Caco-2 (cell line): ENCODE measurements at regions of chr10 and their contacts with region 1.

Region 1: DNA sequence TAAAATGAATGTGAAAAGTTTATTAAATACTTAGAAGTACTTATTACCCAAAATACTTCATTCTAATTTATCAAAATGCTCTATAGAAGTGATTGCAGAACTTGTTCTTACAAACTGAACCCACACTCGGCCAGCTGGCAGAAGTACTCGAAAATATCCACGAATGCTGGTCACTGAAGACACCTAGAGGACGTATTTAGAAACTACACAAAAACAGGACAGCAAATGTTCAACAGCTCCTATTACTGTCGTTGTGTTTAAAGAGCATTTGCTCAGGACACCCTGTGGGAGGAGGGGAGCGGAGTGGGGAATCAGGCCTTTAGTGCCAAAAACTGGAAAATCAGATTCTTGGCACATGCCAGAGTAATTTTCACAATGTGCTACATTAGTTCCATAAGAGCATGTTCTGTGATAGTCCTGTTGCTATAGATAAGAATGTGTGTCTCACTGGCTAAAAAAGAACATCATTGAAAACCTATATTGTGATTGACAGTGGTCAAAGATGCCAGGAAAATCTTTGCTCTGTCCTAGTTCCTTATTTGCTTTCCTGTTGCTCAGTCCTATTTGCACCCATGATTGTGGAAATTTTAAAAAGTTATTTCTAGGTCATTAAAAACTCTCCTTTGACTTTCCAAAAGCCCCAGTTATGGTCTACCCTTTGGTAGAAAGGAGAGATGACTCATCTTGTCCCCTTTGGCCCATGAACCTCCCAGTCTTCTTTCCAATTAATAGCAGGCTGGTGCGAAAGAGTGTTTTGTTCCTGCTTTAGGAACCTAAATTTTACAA is 49.0 kb upstream of the NRBF2 start:
- DNase-seq: peak; percentile 54 to 69
- H3K4me3 ChIP-seq: no peak overlapping the region
- H3K4me3 Mint-ChIP-seq: no peak overlapping the region
- H3K27ac Mint-ChIP-seq: no peak overlapping the region
- H3K4me1 ChIP-seq: no peaks in the 10 kb centered on the region
- H3K4me1 Mint-ChIP-seq: no peaks in the 10 kb centered on the region
- H3K27me3 ChIP-seq: no peaks in the 10 kb centered on the region
- H3K27me3 Mint-ChIP-seq: peaks cover 32% of the 10 kb centered on the region
- CTCF ChIP-seq: peak; percentile 86 to 90

Region 2: GRCh38 chr10:62437696-62438095 is 646.4 kb before region 1 on chr10:
- CTCF ChIA-PET with region 1: interaction called, 3 read pairs
- POLR2A ChIA-PET with region 1: no interaction called
- intact Hi-C with region 1: loop called (anchors 1 kb)
- DNase-seq: peak in 1 of 2 experiments; percentile 79
- H3K4me3 ChIP-seq: no peak overlapping the region
- H3K4me3 Mint-ChIP-seq: no peak overlapping the region
- H3K27ac Mint-ChIP-seq: no peak overlapping the region
- H3K4me1 ChIP-seq: no peaks in the 10 kb centered on the region
- H3K4me1 Mint-ChIP-seq: no peaks in the 10 kb centered on the region
- H3K27me3 ChIP-seq: no peaks in the 10 kb centered on the region
- H3K27me3 Mint-ChIP-seq: peaks cover 21% of the 10 kb centered on the region
- CTCF ChIP-seq: peak; percentile 85

Region 3: GRCh38 chr10:62492012-62492869 is 591.9 kb before region 1 on chr10:
- CTCF ChIA-PET with region 1: interaction called, 7 read pairs
- POLR2A ChIA-PET with region 1: no interaction called
- intact Hi-C with region 1: loop called (anchors 1 kb)
- DNase-seq: peak in 1 of 2 experiments; percentile 36
- H3K4me3 ChIP-seq: no peak overlapping the region
- H3K4me3 Mint-ChIP-seq: no peak overlapping the region
- H3K27ac Mint-ChIP-seq: no peak overlapping the region
- H3K4me1 ChIP-seq: no peaks in the 10 kb centered on the region
- H3K4me1 Mint-ChIP-seq: no peaks in the 10 kb centered on the region
- H3K27me3 ChIP-seq: 0 out of 2 replicates have a peak, but pooled peaks cover 1% of the 10 kb centered on the region
- H3K27me3 Mint-ChIP-seq: peaks cover 19% of the 10 kb centered on the region
- CTCF ChIP-seq: peak; percentile 79 to 83

Region 4: DNA sequence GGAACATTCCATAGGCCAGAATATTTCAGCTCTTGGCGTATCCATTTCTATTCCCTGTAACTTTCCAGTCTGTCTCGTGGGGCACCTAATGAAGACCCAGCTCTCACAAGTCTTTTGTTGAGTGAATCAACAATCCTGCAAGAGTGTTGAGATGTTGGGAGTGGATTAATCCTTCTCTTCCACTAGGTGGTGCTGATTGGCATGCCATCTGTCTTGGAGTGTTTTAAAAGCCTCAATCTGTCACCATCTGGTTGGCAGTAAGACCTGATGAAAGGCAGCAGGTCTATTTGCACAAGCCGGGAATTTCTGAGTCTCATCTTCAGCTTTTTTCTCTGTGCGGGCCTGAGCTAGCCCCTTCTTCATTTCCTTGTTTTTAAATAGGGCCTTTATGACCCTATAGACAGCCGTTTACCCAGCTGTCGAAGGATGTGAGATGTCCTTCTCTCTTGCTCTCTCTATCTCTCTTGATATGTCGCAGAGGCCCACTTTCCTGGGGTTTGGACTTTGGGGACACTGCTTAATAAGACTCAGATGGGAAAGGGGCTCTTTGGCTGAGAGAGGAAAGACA is 529.4 kb before region 1 on chr10:
- CTCF ChIA-PET with region 1: no interaction called
- POLR2A ChIA-PET with region 1: no interaction called
- intact Hi-C with region 1: loop called (anchors 1 kb)
- DNase-seq: peak in 1 of 2 experiments; percentile 50
- H3K4me3 ChIP-seq: no peak overlapping the region
- H3K4me3 Mint-ChIP-seq: no peak overlapping the region
- H3K27ac Mint-ChIP-seq: no peak overlapping the region
- H3K4me1 ChIP-seq: no peaks in the 10 kb centered on the region
- H3K4me1 Mint-ChIP-seq: no peaks in the 10 kb centered on the region
- H3K27me3 ChIP-seq: no peaks in the 10 kb centered on the region; the same call in 1 of the 2 replicates
- H3K27me3 Mint-ChIP-seq: peaks cover 22% of the 10 kb centered on the region
- CTCF ChIP-seq: peak; percentile 52 to 74

Region 5: GRCh38 chr10:62594093-62594520 is 490.0 kb before region 1 on chr10:
- CTCF ChIA-PET with region 1: interaction called, 4 read pairs
- POLR2A ChIA-PET with region 1: no interaction called
- intact Hi-C with region 1: loop called (anchors 1 kb)
- DNase-seq: peak; percentile 68 to 82
- H3K4me3 ChIP-seq: no peak overlapping the region
- H3K4me3 Mint-ChIP-seq: no peak overlapping the region
- H3K27ac Mint-ChIP-seq: no peak overlapping the region
- H3K4me1 ChIP-seq: no peaks in the 10 kb centered on the region
- H3K4me1 Mint-ChIP-seq: no peaks in the 10 kb centered on the region
- H3K27me3 ChIP-seq: no peaks in the 10 kb centered on the region
- H3K27me3 Mint-ChIP-seq: peaks cover 12% of the 10 kb centered on the region
- CTCF ChIP-seq: peak; percentile 99

Region 6: GRCh38 chr10:62610649-62611229 is 473.4 kb before region 1 on chr10:
- CTCF ChIA-PET with region 1: interaction called, 4 read pairs
- POLR2A ChIA-PET with region 1: no interaction called
- intact Hi-C with region 1: loop called (anchors 1 kb)
- DNase-seq: peak; percentile 79 to 85
- H3K4me3 ChIP-seq: no peak overlapping the region
- H3K4me3 Mint-ChIP-seq: peak overlapping the region; percentile 6
- H3K27ac Mint-ChIP-seq: no peak overlapping the region
- H3K4me1 ChIP-seq: no peaks in the 10 kb centered on the region
- H3K4me1 Mint-ChIP-seq: no peaks in the 10 kb centered on the region
- H3K27me3 ChIP-seq: no peaks in the 10 kb centered on the region
- H3K27me3 Mint-ChIP-seq: peaks cover 18% of the 10 kb centered on the region
- CTCF ChIP-seq: peak; percentile 92 to 93

Region 7: GRCh38 chr10:63003816-63004453 is 80.2 kb before region 1 on chr10:
- CTCF ChIA-PET with region 1: no interaction called
- POLR2A ChIA-PET with region 1: no interaction called
- intact Hi-C with region 1: loop called (anchors 1 kb)
- DNase-seq: no peak
- H3K4me3 ChIP-seq: no peak overlapping the region
- H3K4me3 Mint-ChIP-seq: no peak overlapping the region
- H3K27ac Mint-ChIP-seq: no peak overlapping the region
- H3K4me1 ChIP-seq: no peaks in the 10 kb centered on the region
- H3K4me1 Mint-ChIP-seq: no peaks in the 10 kb centered on the region
- H3K27me3 ChIP-seq: no peaks in the 10 kb centered on the region
- H3K27me3 Mint-ChIP-seq: peaks cover 24% of the 10 kb centered on the region
- CTCF ChIP-seq: peak; percentile 35 to 49

Region 8: GRCh38 chr10:63878428-63878827 is 794.3 kb after region 1 on chr10:
- CTCF ChIA-PET with region 1: no interaction called
- POLR2A ChIA-PET with region 1: no interaction called
- intact Hi-C with region 1: no loop called
- DNase-seq: no peak
- H3K4me3 ChIP-seq: no peak overlapping the region
- H3K4me3 Mint-ChIP-seq: no peak overlapping the region
- H3K27ac Mint-ChIP-seq: no peak overlapping the region
- H3K4me1 ChIP-seq: no peaks in the 10 kb centered on the region
- H3K4me1 Mint-ChIP-seq: no peaks in the 10 kb centered on the region
- H3K27me3 ChIP-seq: no peaks in the 10 kb centered on the region
- H3K27me3 Mint-ChIP-seq: peaks cover 6% of the 10 kb centered on the region
- CTCF ChIP-seq: no peak